ENCODE measurements at regions of chr11 and their contacts with region 1.

Region 1: GRCh38 chr11:85988780-85989179 is 80.1 kb downstream of the PICALM start:
- DNase-seq: no peak
- H3K4me3 ChIP-seq: no peak overlapping the region
- H3K27ac ChIP-seq: no peak overlapping the region
- H3K4me1 ChIP-seq: no peaks in the 10 kb centered on the region
- H3K27me3 ChIP-seq: no peaks in the 10 kb centered on the region
- CTCF ChIP-seq: no peak

Region 2: DNA sequence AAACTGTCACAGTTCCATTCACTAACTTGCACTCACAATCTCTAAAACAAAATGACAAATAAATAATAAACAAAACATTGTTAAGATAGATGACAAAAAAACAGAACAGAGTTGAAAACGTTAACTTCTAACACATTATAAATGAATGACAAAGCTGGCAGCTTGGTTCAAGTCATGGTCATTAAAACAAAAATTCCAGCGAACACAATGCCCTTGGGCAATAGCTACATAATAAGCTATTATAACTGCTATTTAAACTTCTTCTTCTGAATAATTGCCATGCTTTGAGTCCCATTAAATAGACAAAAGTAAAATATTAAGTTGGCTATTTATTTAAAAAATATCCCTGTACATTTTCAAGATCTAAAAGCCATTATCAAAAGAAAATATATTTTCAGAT is 25.4 kb after region 1 on chr11:
- CTCF ChIA-PET with region 1: no interaction called
- dilution Hi-C with region 1: no loop called
- in situ Hi-C with region 1: no loop called
- intact Hi-C with region 1: no loop called
- DNase-seq: peak; percentile 1
- H3K4me3 ChIP-seq: no peak overlapping the region
- H3K27ac ChIP-seq: no peak overlapping the region
- H3K4me1 ChIP-seq: no peaks in the 10 kb centered on the region
- H3K27me3 ChIP-seq: no peaks in the 10 kb centered on the region
- CTCF ChIP-seq: no peak

Region 3: GRCh38 chr11:86034710-86035109 is 45.9 kb after region 1 on chr11:
- CTCF ChIA-PET with region 1: no interaction called
- dilution Hi-C with region 1: loop called (anchors 5 kb)
- in situ Hi-C with region 1: no loop called
- intact Hi-C with region 1: no loop called
- DNase-seq: no peak
- H3K4me3 ChIP-seq: no peak overlapping the region
- H3K27ac ChIP-seq: no peak overlapping the region
- H3K4me1 ChIP-seq: no peaks in the 10 kb centered on the region
- H3K27me3 ChIP-seq: no peaks in the 10 kb centered on the region
- CTCF ChIP-seq: no peak

Region 4: GRCh38 chr11:86515297-86516094 is 526.7 kb after region 1 on chr11:
- CTCF ChIA-PET with region 1: interaction called, 18 read pairs
- dilution Hi-C with region 1: no loop called
- in situ Hi-C with region 1: no loop called
- intact Hi-C with region 1: no loop called
- DNase-seq: peak; percentile 97
- H3K4me3 ChIP-seq: no peak overlapping the region
- H3K27ac ChIP-seq: peak overlapping the region; percentile 24
- H3K4me1 ChIP-seq: peaks cover 35% of the 10 kb centered on the region
- H3K27me3 ChIP-seq: no peaks in the 10 kb centered on the region
- CTCF ChIP-seq: no peak

Measured in mammary epithelial cell (primary cell).